Common myeloid progenitor, CD34-positive (primary cell): ENCODE measurements at regions of chr5 and their contacts with region 1.

Region 1: GRCh38 chr5:123371575-123372179 is 51.5 kb downstream of the CEP120 start:
- DNase-seq: peak in 2 of 3 donors; percentile 4 to 5
- H3K4me3 ChIP-seq: no peak overlapping the region
- H3K27ac ChIP-seq: no peak overlapping the region
- H3K4me1 ChIP-seq: no peaks in the 10 kb centered on the region
- H3K27me3 ChIP-seq: no peaks in the 10 kb centered on the region

Region 2: GRCh38 chr5:123359454-123360200 is 12.1 kb before region 1 on chr5:
- CTCF ChIA-PET with region 1: interaction called, 10 read pairs
- POLR2A ChIA-PET with region 1: no interaction called
- DNase-seq: no peak
- H3K4me3 ChIP-seq: no peak overlapping the region
- H3K27ac ChIP-seq: no peak overlapping the region
- H3K4me1 ChIP-seq: no peaks in the 10 kb centered on the region
- H3K27me3 ChIP-seq: no peaks in the 10 kb centered on the region